ENCODE measurements at regions of chr4 and their contacts with region 1.

Region 1: GRCh38 chr4:48739560-48740019 is 40.5 kb downstream of the FRYL start:
- DNase-seq: no peak
- H3K4me3 ChIP-seq: no peak overlapping the region
- H3K27ac ChIP-seq: no peak overlapping the region
- H3K4me1 ChIP-seq: peaks cover 2% of the 10 kb centered on the region
- H3K27me3 ChIP-seq: no peaks in the 10 kb centered on the region
- CTCF ChIP-seq: no peak

Region 2: GRCh38 chr4:48642421-48643374 is 96.9 kb before region 1 on chr4:
- CTCF ChIA-PET with region 1: no interaction called
- dilution Hi-C with region 1: no loop called
- in situ Hi-C with region 1: no loop called
- intact Hi-C with region 1: no loop called
- DNase-seq: no peak
- H3K4me3 ChIP-seq: no peak overlapping the region
- H3K27ac ChIP-seq: no peak overlapping the region
- H3K4me1 ChIP-seq: no peaks in the 10 kb centered on the region
- H3K27me3 ChIP-seq: no peaks in the 10 kb centered on the region
- CTCF ChIP-seq: no peak

Region 3: DNA sequence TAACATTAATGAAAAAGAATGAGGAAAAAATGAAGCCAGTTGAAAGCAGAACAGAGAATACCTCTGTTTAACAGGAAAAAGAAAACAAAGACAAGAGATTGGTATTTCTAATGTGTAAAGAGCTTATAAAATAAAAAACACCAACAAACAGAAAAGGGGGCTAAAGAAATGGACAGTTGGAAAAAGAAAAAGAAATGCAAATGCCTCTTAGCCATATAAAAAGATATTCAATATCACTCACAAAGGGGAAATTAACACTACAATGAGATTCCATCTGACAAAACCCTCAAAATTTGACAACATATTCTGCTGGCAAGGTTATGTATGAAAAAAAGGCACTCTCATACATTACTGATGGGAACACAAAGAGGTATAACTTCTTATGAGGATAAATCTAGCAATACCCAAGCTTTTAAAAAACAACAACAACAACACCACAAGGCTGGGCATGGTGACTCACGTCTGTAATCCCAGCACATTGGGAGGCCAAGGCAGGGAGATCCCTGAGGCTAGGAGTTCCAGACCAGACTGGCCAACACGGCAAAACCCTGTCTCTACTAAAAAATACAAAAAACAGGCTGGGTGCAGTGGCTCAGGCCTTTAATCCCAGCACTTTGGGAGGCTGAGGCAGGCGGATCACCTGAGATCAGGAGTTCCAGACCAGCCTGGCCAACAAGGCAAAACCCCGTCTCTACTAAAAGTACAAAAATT is 35.3 kb before region 1 on chr4:
- CTCF ChIA-PET with region 1: no interaction called
- dilution Hi-C with region 1: no loop called
- in situ Hi-C with region 1: no loop called
- intact Hi-C with region 1: loop called (anchors 5 kb)
- DNase-seq: no peak
- H3K4me3 ChIP-seq: no peak overlapping the region
- H3K27ac ChIP-seq: no peak overlapping the region
- H3K4me1 ChIP-seq: peaks cover 26% of the 10 kb centered on the region
- H3K27me3 ChIP-seq: no peaks in the 10 kb centered on the region
- CTCF ChIP-seq: no peak

Measured in mammary epithelial cell (primary cell).